PC-9 (cell line): ENCODE measurements at regions of chr1 and their contacts with region 1.

Region 1: DNA sequence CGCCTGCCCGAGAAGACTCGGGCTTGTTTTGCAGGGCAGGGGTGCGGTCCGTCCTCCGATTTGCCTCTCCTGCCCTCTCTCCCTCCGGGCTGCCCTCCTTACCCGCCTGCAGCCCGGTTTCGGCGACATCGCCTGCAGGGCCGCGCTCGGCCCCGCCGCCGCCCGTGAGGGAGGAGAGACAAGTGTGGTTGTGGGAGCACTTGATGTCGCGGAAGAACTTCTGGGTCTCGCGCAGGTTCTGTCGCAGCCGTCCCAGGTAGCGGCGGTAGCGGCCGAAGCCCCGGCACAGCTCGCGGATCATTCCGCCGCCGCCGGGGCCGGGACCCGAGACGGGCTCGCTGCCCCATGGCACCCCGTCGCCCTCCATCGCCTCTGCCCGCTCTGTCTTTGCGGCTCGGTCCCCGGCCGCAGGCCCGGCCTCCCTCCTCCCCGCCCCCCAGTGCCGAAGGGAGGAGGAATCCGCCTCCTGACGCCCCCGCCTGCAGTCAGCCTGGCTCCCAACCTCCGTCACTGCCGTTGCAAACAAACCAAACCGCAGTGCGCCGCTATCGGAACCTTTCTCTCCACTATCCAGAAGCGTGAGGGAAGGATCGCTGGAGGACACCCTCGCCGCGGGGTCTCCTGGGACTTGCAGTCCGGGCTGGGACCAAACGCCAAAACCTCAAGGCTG is at the start of gene DSTYK:
- DNase-seq: peak; percentile 84 to 92
- H3K4me3 ChIP-seq: peak within 1 kb of the TSS; percentile 85
- H3K27ac ChIP-seq: peak within 1 kb of the TSS; percentile 46; the same call in 1 of the 2 replicates
- H3K4me1 ChIP-seq: peaks cover 10% of the 10 kb centered on the region
- H3K27me3 ChIP-seq: no peaks in the 10 kb centered on the region
- CTCF ChIP-seq: no peak
- total RNA-seq, gene DSTYK: 8.1 and 10.5 TPM in 2 replicates

Region 2: GRCh38 chr1:205227584-205228006 is 16.3 kb after region 1 on chr1 and contains the start of gene TMCC2:
- CTCF ChIA-PET with region 1: no interaction called
- POLR2A ChIA-PET with region 1: no interaction called
- intact Hi-C with region 1: loop called (anchors 2 kb)
- DNase-seq: peak; percentile 52 to 82
- H3K4me3 ChIP-seq: peak within 1 kb of the TSS; percentile 58
- H3K27ac ChIP-seq: no peak within 1 kb of the TSS
- H3K4me1 ChIP-seq: 0 out of 2 replicates have a peak, but pooled peaks cover 8% of the 10 kb centered on the region
- H3K27me3 ChIP-seq: peaks cover 12% of the 10 kb centered on the region; the same call in 1 of the 2 replicates
- CTCF ChIP-seq: no peak
- total RNA-seq, gene TMCC2: 0.79 and 0.80 TPM in 2 replicates

Region 3: GRCh38 chr1:205248793-205249601 is 37.7 kb after region 1 on chr1:
- CTCF ChIA-PET with region 1: no interaction called
- POLR2A ChIA-PET with region 1: no interaction called
- intact Hi-C with region 1: no loop called
- DNase-seq: no peak
- H3K4me3 ChIP-seq: no peak overlapping the region
- H3K27ac ChIP-seq: no peak overlapping the region
- H3K4me1 ChIP-seq: no peaks in the 10 kb centered on the region
- H3K27me3 ChIP-seq: peaks cover 12% of the 10 kb centered on the region
- CTCF ChIP-seq: no peak

Region 4: GRCh38 chr1:205300886-205301821 is 89.8 kb after region 1 on chr1:
- CTCF ChIA-PET with region 1: no interaction called
- POLR2A ChIA-PET with region 1: no interaction called
- intact Hi-C with region 1: no loop called
- DNase-seq: peak; percentile 78 to 85
- H3K4me3 ChIP-seq: peak overlapping the region; percentile 15; the same call in 1 of the 2 replicates
- H3K27ac ChIP-seq: peak overlapping the region; percentile 68
- H3K4me1 ChIP-seq: peaks cover 53% of the 10 kb centered on the region
- H3K27me3 ChIP-seq: no peaks in the 10 kb centered on the region
- CTCF ChIP-seq: no peak